Endothelial cell of umbilical vein (primary cell): ENCODE measurements at regions of chr2 and their contacts with region 1.

Region 1: DNA sequence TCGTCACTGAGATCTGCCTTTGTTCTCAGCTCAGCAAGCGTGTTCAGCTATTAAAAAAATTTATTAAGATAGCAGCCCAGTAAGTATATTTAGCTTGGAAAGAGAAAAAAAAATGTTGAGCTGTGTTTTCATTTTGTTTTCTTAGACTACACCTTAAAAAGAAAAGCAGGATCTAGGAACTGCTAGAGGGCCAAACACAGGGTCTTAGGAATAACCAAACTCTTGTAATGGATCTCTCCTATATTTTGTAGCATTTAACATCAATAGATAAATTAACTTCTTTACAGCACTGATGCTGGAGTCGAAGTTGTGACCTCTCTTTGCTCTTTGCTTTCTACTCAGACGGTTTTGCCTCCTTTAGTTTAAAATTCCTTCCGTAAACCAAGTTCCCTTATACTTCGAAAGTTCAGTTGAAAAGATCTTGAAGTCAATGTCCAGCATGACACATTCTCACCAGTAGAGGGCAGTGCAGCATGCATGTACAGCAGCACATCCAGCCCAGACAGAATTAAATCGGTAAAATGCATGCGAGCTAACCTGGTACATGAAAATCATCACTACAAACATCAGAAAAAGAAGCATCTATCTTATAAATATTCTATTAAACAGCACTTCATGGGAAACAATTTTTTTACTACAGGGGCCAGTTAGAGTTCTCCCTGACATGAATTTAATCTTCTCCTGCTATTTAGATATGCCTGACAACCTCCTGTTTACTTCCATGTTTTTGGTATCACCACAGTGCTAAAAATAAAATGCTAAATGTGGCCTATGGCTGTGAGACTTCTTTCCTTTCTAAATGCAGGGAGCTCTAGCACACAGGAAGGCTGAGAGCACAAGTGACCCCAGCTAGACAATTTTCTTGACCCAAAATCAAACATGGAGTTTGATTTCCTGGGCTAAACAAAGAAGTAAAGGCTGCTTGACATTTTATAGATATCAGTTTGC is 48.2 kb upstream of the MAP3K20 start:
- DNase-seq: peak; percentile 87
- H3K4me3 ChIP-seq: no peak overlapping the region
- H3K27ac ChIP-seq: no peak overlapping the region
- H3K4me1 ChIP-seq: no peaks in the 10 kb centered on the region
- H3K27me3 ChIP-seq: peaks cover 0 to 2% of the 10 kb centered on the region in 2 experiments
- CTCF ChIP-seq: peak; percentile 73 to 85
- POLR2A ChIP-seq: no peak

Region 2: DNA sequence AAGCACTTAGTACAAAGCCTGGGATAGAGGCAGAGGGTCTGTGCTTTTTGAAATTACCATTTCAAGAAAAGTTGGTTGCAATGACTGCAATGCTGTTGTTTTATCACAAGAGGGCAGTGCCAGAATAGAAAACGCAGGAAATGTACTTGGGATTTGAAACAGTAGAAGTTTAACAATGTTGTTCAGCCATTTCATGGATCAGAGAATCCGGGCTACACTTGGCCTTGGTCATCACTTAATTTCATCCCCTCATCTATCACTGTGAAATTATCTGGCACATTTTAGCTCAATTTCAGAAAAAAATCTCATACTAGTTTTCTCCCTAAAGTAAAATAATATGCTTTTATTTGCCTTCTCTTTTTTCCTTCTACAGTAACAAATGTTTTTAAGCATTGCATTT is 221.0 kb before region 1 on chr2:
- CTCF ChIA-PET with region 1: interaction called, 17 read pairs
- POLR2A ChIA-PET with region 1: no interaction called
- dilution Hi-C with region 1: no loop called
- intact Hi-C with region 1: loop called (anchors 1 kb)
- DNase-seq: peak; percentile 54
- H3K4me3 ChIP-seq: no peak overlapping the region
- H3K27ac ChIP-seq: no peak overlapping the region
- H3K4me1 ChIP-seq: no peaks in the 10 kb centered on the region
- H3K27me3 ChIP-seq: no peaks in the 10 kb centered on the region
- CTCF ChIP-seq: peak; percentile 65 to 79
- POLR2A ChIP-seq: no peak

Region 3: DNA sequence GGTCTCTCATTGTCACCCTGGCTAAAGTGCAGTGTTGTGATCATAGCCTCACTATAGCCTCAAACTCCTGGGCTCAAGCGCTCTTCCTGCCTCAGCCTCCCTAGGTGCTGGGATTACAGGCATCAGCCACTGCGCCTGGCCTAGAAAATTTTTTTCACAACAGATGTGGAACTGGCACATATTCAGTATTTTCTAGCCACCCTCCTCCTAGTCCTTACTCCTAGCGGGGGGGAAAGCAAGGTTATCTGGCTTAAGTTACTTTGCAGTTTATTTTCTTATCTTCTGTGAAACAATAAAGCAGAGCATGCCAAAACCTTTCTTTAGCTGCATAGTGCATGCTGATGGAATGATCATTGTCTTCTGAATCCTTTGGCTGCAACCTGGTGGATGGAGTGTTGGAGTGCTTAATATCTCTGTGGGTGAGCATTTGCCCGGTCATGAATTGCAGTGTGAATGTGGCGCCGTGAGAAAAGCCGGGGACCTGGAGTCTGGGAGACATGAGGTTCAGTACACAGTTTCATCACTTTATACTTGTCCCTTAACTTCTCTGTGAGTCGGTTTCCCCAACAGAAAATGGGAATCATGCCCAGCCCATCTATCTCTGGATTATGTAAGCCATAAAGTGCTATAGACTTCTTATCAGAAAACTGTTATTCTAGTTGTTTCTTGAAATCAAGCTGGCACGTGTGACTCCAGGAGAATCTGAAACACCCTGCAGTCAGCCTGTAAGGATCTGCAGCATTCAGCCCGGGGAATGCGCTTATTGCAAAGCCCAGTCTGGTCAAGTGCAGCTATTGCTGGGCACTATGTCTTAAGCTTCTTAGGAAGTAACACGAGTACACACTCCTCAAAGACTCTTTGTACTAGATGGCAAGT is 10.0 kb after region 1 on chr2:
- CTCF ChIA-PET with region 1: interaction called, 26 read pairs
- POLR2A ChIA-PET with region 1: no interaction called
- dilution Hi-C with region 1: no loop called
- intact Hi-C with region 1: no loop called
- DNase-seq: peak; percentile 41
- H3K4me3 ChIP-seq: no peak overlapping the region
- H3K27ac ChIP-seq: no peak overlapping the region
- H3K4me1 ChIP-seq: no peaks in the 10 kb centered on the region
- H3K27me3 ChIP-seq: no peaks in the 10 kb centered on the region
- CTCF ChIP-seq: no peak
- POLR2A ChIP-seq: no peak

Region 4: GRCh38 chr2:173090276-173090877 is 62.9 kb after region 1 on chr2:
- CTCF ChIA-PET with region 1: interaction called, 18 read pairs
- POLR2A ChIA-PET with region 1: no interaction called
- dilution Hi-C with region 1: no loop called
- intact Hi-C with region 1: no loop called
- DNase-seq: no peak
- H3K4me3 ChIP-seq: no peak overlapping the region
- H3K27ac ChIP-seq: no peak overlapping the region
- H3K4me1 ChIP-seq: no peaks in the 10 kb centered on the region
- H3K27me3 ChIP-seq: no peaks in the 10 kb centered on the region
- CTCF ChIP-seq: no peak
- POLR2A ChIP-seq: no peak

Region 5: DNA sequence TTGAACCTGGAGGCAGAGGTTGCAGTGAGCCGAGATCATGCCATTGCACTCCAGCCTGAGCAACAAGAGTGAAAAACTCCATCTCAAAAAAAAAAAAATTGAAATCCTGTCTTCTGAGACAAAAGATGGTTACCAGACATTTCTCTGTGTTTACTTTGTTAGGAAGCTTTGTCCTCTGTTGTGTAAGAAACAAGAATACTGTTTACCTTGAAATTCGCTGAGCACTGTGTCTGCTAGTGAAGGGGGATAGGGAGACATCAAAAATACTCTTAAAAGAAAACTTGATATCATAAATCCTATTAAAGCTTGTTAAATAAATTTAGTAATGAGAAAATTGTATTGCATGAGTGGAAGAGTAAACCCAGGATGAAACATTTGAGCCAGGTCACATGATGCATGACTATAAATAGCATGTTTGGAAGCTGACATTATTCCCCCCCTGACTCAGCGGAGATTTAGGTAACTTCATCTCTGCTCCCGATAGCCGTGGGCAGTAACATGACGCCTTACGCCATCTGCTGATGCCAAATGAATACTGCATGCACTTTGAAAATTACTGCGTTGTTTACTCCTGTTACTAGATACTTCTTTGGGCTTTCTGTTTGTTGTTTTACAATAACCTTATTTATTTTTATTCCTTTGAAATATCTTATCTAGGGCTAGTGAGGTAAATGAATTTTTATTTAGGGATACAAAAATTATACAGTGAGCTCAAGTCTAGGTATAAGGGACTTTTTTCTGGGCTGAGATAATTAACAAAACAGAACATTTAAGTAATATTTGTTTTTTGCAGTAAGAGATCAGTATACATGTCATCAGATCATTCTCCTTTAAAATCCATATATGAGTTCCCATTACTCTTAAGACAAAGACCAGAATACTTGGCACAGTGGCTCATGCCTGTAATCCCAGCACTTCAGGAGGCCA is 183.1 kb after region 1 on chr2:
- CTCF ChIA-PET with region 1: interaction called, 493 read pairs
- POLR2A ChIA-PET with region 1: no interaction called
- dilution Hi-C with region 1: loop called (anchors 25 kb)
- intact Hi-C with region 1: loop called (anchors 1 kb)
- DNase-seq: peak; percentile 87
- H3K4me3 ChIP-seq: no peak overlapping the region
- H3K27ac ChIP-seq: no peak overlapping the region
- H3K4me1 ChIP-seq: no peaks in the 10 kb centered on the region
- H3K27me3 ChIP-seq: no peaks in the 10 kb centered on the region
- CTCF ChIP-seq: peak; percentile 71 to 80
- POLR2A ChIP-seq: no peak

Region 6: GRCh38 chr2:173448938-173449471 is 421.6 kb after region 1 on chr2:
- CTCF ChIA-PET with region 1: interaction called, 20 read pairs
- POLR2A ChIA-PET with region 1: no interaction called
- dilution Hi-C with region 1: no loop called
- intact Hi-C with region 1: loop called (anchors 1 kb)
- DNase-seq: peak; percentile 64
- H3K4me3 ChIP-seq: peak overlapping the region; percentile 29 to 45 (median 37)
- H3K27ac ChIP-seq: no peak overlapping the region
- H3K4me1 ChIP-seq: peaks cover 3% of the 10 kb centered on the region
- H3K27me3 ChIP-seq: peaks cover 3 to 9% of the 10 kb centered on the region in 2 experiments
- CTCF ChIP-seq: peak; percentile 63 to 65
- POLR2A ChIP-seq: peak; percentile 21